OCI-LY7 (cell line): ENCODE measurements at regions of chr1 and their contacts with region 1.

Region 1: GRCh38 chr1:222634180-222635013 is 16.5 kb downstream of the MIA3 start:
- DNase-seq: peak; percentile 86
- H3K4me3 ChIP-seq: no peak overlapping the region
- H3K27ac ChIP-seq: no peak overlapping the region
- H3K4me1 ChIP-seq: no peaks in the 10 kb centered on the region
- CTCF ChIP-seq: peak; percentile 96

Region 2: GRCh38 chr1:222465211-222466041 is 169.0 kb before region 1 on chr1:
- CTCF ChIA-PET with region 1: no interaction called
- POLR2A ChIA-PET with region 1: no interaction called
- intact Hi-C with region 1: loop called (anchors 1 kb)
- DNase-seq: peak; percentile 81
- H3K4me3 ChIP-seq: peak overlapping the region; percentile 33
- H3K27ac ChIP-seq: no peak overlapping the region
- H3K4me1 ChIP-seq: peaks cover 5% of the 10 kb centered on the region
- CTCF ChIP-seq: peak; percentile 95

Region 3: DNA sequence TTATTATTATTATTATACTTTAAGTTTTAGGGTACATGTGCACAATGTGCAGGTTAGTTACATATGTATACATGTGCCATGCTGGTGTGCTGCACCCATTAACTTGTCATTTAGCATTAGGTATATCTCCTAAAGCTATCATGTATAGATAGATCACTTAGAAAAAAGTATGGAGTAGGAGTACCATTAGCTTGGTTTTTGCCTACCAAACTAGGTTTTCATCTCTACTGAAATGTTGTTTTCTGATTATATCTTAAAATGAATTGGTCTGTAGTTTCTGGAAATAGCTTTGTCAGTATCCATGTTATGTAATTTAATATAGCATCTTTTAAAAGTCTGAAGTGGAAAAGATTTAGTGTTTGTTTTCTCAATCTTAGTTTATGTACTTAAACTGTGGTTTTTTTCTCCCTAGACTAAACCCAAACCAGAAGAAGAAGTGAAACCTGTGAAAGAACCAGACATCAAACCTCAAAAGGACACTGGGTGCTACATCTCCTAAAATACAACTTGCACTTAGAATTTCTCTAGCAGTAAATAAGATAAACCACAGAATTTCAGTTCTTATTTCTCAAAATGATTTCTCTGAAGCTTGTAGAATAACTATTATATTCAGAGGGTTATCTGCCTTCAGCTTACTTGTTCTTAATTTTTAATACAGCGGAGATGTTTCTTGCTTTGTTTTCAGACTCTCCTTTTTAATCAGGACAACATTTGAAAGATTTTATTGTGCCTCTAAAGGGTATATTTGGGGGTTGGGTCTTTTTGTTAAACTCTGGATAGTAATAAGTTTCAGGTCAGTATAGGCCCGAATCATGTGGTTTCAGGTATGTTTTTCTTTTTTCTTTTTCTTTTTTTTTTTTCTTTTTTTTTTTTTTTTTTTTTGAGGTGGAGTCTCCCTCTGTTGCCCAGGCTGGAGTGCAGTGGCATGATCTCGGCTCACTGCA is 98.1 kb after region 1 on chr1:
- CTCF ChIA-PET with region 1: no interaction called
- POLR2A ChIA-PET with region 1: no interaction called
- intact Hi-C with region 1: no loop called
- DNase-seq: peak; percentile 80
- H3K4me3 ChIP-seq: peak overlapping the region; percentile 39
- H3K27ac ChIP-seq: peak overlapping the region; percentile 80
- H3K4me1 ChIP-seq: peaks cover 35% of the 10 kb centered on the region
- CTCF ChIP-seq: no peak